ENCODE measurements at regions of chr22 and their contacts with region 1.

Region 1: DNA sequence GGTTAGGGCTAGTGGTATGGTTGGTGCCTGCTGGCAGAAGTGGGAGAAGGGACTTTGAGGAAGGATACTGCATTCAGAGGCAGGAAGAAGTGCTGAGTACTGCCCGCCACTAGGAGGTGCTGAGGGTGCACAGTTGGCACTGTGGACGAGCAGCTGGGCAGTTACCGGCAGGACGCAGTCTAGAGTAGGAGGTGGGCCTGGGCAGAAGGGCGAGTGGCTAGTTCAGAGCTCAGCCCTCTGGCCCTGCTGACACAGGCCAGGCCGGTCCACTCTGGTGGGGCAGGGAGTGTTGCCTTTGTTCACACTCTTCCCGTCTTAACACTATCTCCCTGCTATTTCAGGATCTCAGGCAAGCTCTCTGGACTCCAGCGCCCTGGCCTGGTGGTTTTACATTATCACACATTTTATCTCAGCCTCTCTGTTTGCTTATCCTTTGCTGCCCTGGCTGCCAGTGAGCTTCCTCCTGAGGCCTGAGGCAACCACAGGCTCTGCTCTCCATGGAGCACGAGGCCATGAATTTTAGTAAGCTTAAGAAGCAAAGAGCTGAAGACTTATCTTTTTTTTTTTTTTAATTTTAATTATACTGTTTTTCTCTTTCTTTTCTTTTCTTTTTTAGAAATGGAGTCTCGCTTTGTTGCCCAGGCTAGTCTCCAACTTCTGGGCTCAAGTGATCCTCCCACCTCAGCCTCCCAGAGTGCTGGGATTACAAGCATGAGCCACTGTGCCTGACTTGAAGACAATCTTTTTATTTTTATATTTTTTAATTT is 26.9 kb downstream of the SNAP29 start:
- DNase-seq: peak; percentile 74 to 86 (median 81)
- ATAC-seq: peak; percentile 91 to 98 (median 97)
- H3K4me3 ChIP-seq: no peak overlapping the region
- H3K27ac ChIP-seq: peak overlapping the region; percentile 24 to 76 (median 72)
- H3K4me1 ChIP-seq: peaks cover 0 to 25% (median 11%) of the 10 kb centered on the region in 12 donors
- H3K27me3 ChIP-seq: no peaks in the 10 kb centered on the region
- CTCF ChIP-seq: peak; percentile 63 to 89 (median 77)
- POLR2A ChIP-seq: no peak

Region 2: GRCh38 chr22:20380486-20380885 is 505.3 kb before region 1 on chr22:
- intact Hi-C with region 1: no loop called
- DNase-seq: no peak
- ATAC-seq: no peak
- H3K4me3 ChIP-seq: no peak overlapping the region
- H3K27ac ChIP-seq: no peak overlapping the region
- H3K4me1 ChIP-seq: no peaks in the 10 kb centered on the region
- H3K27me3 ChIP-seq: peaks cover 0 to 12% (median 2%) of the 10 kb centered on the region in 9 donors
- CTCF ChIP-seq: no peak
- POLR2A ChIP-seq: no peak

Region 3: DNA sequence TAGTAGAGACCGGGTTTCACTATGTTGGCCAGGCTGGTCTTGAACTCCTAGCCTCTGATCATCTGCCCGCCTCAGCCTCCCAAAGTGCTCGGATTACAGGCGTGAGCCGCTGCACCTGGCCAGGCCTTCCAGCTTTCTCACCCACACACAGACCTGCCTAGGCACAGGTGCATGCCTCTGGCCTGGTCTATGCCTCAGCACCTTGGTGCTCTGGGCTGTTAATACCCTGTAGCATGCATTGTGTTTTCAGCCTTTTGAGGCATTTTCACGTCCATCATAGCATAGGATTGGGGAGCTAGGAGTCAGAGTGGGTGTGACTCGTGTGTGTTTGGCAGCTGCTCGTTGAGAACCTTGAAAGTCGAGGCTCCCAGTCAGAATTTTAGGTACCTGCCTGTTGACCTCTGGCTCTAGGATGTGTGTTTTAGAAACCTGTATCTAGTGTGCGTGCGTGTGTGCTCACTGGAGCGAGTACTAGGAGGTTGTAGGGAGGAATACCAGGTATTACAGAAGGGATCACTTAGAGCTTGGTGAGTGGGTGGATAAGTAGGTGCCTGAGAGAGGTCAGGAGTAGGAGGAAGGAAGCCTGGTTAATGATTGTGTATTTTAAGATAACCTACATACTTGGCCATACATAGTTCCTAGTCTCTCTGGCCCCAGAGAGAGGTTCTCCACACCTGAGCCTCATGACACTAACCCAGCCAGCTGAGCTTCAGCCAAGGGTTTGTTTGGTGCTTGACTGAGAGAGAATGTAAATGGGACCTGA is 51.5 kb after region 1 on chr22:
- intact Hi-C with region 1: loop called in 1 of 10 experiments (anchors 10 kb)
- DNase-seq: no peak
- ATAC-seq: peak in 3 of 4 donors; percentile 15 to 46 (median 37)
- H3K4me3 ChIP-seq: no peak overlapping the region
- H3K27ac ChIP-seq: no peak overlapping the region
- H3K4me1 ChIP-seq: peaks cover 0 to 65% (median 47%) of the 10 kb centered on the region in 12 donors
- H3K27me3 ChIP-seq: no peaks in the 10 kb centered on the region
- CTCF ChIP-seq: no peak
- POLR2A ChIP-seq: no peak

Region 4: DNA sequence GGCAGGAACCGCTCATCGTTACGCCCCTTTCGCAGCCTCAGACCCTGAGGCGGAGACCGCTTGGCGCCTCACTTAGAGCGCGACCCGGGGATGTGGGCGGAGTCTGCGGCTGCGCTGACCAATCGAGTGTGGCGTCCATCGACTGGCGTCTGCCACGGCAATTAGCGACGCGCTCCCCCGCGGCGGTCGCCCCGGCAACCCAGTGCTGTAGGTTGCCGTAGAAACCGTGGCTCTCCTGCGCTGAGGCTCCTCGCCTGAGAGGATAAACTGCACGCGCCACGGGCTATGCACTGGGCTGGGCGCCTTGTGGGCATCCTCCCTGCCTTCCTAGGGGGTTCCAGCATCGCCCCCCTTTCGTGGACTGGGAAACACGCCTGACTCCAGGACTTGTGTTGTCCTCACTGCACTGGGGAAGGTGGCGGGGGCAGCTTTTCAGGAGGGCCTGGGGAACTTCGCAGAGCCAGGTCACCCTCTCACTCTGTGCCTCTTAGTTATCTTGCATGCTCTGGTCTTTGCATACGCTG is 128.5 kb after region 1 on chr22:
- intact Hi-C with region 1: loop called in 1 of 10 experiments (anchors 10 kb)
- DNase-seq: peak; percentile 92 to 94 (median 92)
- ATAC-seq: peak; percentile 83 to 94 (median 90)
- H3K4me3 ChIP-seq: peak overlapping the region in 11 of 12 donors; percentile 18 to 64 (median 55)
- H3K27ac ChIP-seq: peak overlapping the region in 10 of 12 donors; percentile 39 to 84 (median 68)
- H3K4me1 ChIP-seq: peaks cover 3 to 27% (median 20%) of the 10 kb centered on the region in 12 donors
- H3K27me3 ChIP-seq: no peaks in the 10 kb centered on the region
- CTCF ChIP-seq: no peak
- POLR2A ChIP-seq: peak in 1 of 2 donors; percentile 29

Measured in heart left ventricle (tissue), 16 donors.